ENCODE measurements at regions of chr11 and their contacts with region 1.

Region 1: GRCh38 chr11:4187055-4187988 is 92.7 kb downstream of the RRM1 start:
- DNase-seq: peak; percentile 93
- ATAC-seq: peak; percentile 89
- H3K4me3 Mint-ChIP-seq: peak overlapping the region; percentile 73
- H3K27ac Mint-ChIP-seq: no peak overlapping the region
- H3K4me1 Mint-ChIP-seq: no peaks in the 10 kb centered on the region
- H3K27me3 Mint-ChIP-seq: peaks cover 18% of the 10 kb centered on the region; the same call in 1 of the 2 replicates
- CTCF ChIP-seq: peak; percentile 97

Region 2: DNA sequence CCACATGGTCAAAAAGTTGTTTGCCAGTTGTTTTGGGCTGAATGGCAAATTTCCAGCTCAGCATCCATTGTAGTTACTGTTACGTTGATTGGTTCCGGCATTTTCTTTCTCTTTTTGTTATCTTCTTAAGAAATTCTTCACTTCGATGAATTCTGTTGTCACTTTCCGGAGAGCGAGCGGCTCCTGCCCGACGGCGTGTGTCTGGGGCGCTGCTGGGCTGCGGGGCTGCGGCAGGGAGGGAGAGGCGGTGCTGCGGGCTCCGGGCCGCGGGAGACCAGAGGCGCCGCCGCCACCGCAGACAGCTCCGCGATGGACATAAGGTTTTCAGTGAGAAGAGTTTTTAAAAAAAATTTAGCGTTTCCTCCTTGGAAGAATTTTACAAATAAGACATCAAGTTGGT is 24.7 kb after region 1 on chr11:
- CTCF ChIA-PET with region 1: interaction called, 14 read pairs
- POLR2A ChIA-PET with region 1: no interaction called
- DNase-seq: peak; percentile 45
- ATAC-seq: peak; percentile 98
- H3K4me3 Mint-ChIP-seq: peak overlapping the region; percentile 47
- H3K27ac Mint-ChIP-seq: no peak overlapping the region
- H3K4me1 Mint-ChIP-seq: peaks cover 4% of the 10 kb centered on the region; the same call in 1 of the 2 replicates
- H3K27me3 Mint-ChIP-seq: peaks cover 24% of the 10 kb centered on the region
- CTCF ChIP-seq: no peak

Region 3: DNA sequence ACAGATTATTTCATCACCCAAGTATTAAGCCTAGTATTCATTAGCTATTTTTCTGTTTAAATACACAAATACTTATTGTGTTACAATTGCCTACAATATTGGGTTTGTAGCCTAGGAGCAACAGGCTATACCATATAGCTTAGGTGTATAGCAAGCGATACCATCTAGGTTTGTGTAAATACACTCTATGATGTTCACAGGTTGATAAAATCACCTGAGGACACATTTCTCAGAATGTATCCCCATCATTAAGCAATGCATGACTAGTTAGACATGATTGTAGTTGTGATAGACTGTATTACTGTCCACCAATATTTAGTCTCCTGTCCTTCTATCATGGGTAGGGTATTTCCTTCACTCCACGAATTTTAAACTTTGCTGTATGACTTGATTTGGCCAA is 303.5 kb after region 1 on chr11:
- CTCF ChIA-PET with region 1: interaction called, 52 read pairs
- POLR2A ChIA-PET with region 1: no interaction called
- DNase-seq: no peak
- ATAC-seq: no peak
- H3K4me3 Mint-ChIP-seq: no peak overlapping the region
- H3K27ac Mint-ChIP-seq: no peak overlapping the region
- H3K4me1 Mint-ChIP-seq: no peaks in the 10 kb centered on the region
- H3K27me3 Mint-ChIP-seq: no peaks in the 10 kb centered on the region
- CTCF ChIP-seq: no peak

Region 4: DNA sequence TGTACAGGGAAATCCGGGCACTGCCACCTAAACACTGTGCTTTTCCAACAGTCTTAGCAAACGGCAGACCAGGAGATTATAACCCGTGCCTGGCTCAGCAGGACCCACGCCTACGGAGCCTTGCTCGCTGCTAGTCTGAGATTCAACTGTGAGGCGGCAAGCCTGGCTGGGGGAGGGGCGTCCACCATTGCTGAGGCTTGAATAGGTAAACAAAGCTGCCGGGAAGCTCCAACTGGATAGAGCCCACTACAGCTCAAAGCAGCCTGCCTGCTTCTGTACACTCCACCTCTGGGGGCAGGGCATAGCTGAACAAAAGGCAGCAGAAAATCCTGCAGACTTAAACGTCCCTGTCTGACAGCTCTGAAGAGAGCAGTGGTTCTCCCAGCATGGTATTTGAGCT is 344.4 kb after region 1 on chr11:
- CTCF ChIA-PET with region 1: interaction called, 10 read pairs
- POLR2A ChIA-PET with region 1: no interaction called
- DNase-seq: peak; percentile 24
- ATAC-seq: peak; percentile 28; the same call in 1 of the 2 replicates
- H3K4me3 Mint-ChIP-seq: no peak overlapping the region
- H3K27ac Mint-ChIP-seq: no peak overlapping the region
- H3K4me1 Mint-ChIP-seq: no peaks in the 10 kb centered on the region
- H3K27me3 Mint-ChIP-seq: peaks cover 5% of the 10 kb centered on the region; the same call in 1 of the 2 replicates
- CTCF ChIP-seq: no peak

Region 5: GRCh38 chr11:4607781-4608666 is 420.7 kb after region 1 on chr11 and contains the start of gene TRIM68:
- CTCF ChIA-PET with region 1: interaction called, 18 read pairs
- POLR2A ChIA-PET with region 1: interaction called, 3 read pairs
- DNase-seq: peak; percentile 95
- ATAC-seq: peak; percentile 98
- H3K4me3 Mint-ChIP-seq: peak within 1 kb of the TSS; percentile 77
- H3K27ac Mint-ChIP-seq: peak within 1 kb of the TSS; percentile 45
- H3K4me1 Mint-ChIP-seq: peaks cover 9% of the 10 kb centered on the region
- H3K27me3 Mint-ChIP-seq: peaks cover 19% of the 10 kb centered on the region
- CTCF ChIP-seq: no peak
- total RNA-seq, gene TRIM68: 8.2 to 10.7 TPM (median 8.7 TPM) in 3 replicates

Region 6: DNA sequence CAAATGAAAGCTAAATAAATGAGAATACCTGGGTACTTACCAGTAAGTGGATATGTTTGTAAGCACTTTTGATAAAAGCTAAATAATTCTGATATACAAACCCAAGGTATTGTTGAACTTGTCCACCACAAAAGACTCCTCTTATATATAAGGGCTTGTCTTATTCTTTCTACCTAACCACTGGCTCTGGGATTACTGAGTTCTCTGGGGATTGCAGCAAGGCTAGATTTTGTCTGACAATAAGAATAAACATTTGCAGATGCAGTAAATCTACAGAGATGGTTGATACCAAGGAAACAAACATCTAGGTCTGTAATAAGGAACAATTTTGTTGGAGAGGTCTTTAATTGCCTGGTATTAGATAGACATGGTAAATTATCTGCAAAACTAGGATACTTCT is 760.2 kb after region 1 on chr11 and contains the start of gene OR51A4:
- CTCF ChIA-PET with region 1: no interaction called
- POLR2A ChIA-PET with region 1: no interaction called
- DNase-seq: no peak
- ATAC-seq: no peak
- H3K4me3 Mint-ChIP-seq: no peak within 1 kb of the TSS
- H3K27ac Mint-ChIP-seq: no peak within 1 kb of the TSS
- H3K4me1 Mint-ChIP-seq: no peaks in the 10 kb centered on the region
- H3K27me3 Mint-ChIP-seq: peaks cover 4% of the 10 kb centered on the region; the same call in 1 of the 2 replicates
- CTCF ChIP-seq: no peak
- total RNA-seq, gene OR51A4: not detected in 3 replicates

Measured in WTC11 (cell line).